Ascending aorta (tissue), 2 donors: ENCODE measurements at regions of chr16 and their contacts with region 1.

Region 1: GRCh38 chr16:10521681-10522274 is 58.6 kb downstream of the EMP2 start:
- DNase-seq: peak in 1 of 2 donors; percentile 79
- H3K4me3 ChIP-seq: no peak overlapping the region
- H3K27ac ChIP-seq: no peak overlapping the region
- H3K4me1 ChIP-seq: no peaks in the 10 kb centered on the region
- H3K27me3 ChIP-seq: no peaks in the 10 kb centered on the region
- CTCF ChIP-seq: peak; percentile 62 to 79 (median 72)

Region 2: GRCh38 chr16:10509534-10510025 is 12.2 kb before region 1 on chr16:
- intact Hi-C with region 1: no loop called
- DNase-seq: no peak
- H3K4me3 ChIP-seq: no peak overlapping the region
- H3K27ac ChIP-seq: no peak overlapping the region
- H3K4me1 ChIP-seq: peaks cover 4 to 6% of the 10 kb centered on the region in 2 donors
- H3K27me3 ChIP-seq: no peaks in the 10 kb centered on the region
- CTCF ChIP-seq: peak; percentile 63 to 79 (median 72)

Region 3: DNA sequence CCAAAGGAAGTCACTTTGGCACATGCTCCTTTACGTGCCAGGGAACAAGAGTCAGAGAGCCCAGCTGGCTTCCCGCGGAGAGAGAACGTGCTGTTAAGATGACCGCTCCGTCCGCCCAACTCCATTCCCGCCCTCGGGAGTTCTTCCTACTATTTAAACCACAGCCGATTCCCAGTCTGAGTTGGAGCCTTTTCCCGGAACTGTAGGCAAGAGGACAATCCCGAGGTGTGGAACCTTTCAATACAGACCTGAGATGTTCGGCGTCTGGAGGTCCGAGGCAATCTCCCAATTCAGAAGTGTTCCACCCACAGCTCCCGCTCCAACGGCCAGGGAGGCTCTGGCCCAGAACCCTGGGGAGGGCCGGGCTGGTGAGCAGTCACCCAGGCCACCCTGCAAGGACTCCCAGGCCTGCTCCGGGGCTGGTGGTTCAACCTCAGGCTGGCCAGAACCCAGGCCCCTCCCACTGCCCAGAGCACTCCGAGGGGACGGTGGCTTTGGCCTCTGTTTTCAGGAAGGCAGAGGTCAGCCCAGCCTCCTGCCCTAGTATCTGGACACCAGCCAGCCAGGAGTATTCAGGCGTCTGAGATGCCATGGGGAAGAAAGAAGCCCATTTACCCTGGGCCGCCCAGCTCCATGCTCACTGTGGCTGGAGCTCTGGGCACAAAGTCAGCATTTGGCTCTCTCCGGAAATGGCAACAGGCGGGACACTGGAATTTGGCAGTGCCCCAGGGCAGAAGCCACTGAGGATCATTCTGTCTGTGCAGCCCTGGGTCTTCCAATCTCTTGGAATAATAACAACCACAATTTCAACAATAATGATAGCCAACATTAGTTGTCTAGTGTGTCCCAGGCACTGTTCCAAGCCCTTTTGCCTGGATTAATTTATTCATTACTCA is 37.2 kb after region 1 on chr16:
- intact Hi-C with region 1: loop called (anchors 2 kb)
- DNase-seq: peak; percentile 46 to 88
- H3K4me3 ChIP-seq: peak overlapping the region; percentile 27 to 37
- H3K27ac ChIP-seq: peak overlapping the region; percentile 79 to 93
- H3K4me1 ChIP-seq: peaks cover 12 to 54% of the 10 kb centered on the region in 2 donors
- H3K27me3 ChIP-seq: no peaks in the 10 kb centered on the region
- CTCF ChIP-seq: no peak